ENCODE measurements at regions of chr22 and their contacts with region 1.

Region 1: DNA sequence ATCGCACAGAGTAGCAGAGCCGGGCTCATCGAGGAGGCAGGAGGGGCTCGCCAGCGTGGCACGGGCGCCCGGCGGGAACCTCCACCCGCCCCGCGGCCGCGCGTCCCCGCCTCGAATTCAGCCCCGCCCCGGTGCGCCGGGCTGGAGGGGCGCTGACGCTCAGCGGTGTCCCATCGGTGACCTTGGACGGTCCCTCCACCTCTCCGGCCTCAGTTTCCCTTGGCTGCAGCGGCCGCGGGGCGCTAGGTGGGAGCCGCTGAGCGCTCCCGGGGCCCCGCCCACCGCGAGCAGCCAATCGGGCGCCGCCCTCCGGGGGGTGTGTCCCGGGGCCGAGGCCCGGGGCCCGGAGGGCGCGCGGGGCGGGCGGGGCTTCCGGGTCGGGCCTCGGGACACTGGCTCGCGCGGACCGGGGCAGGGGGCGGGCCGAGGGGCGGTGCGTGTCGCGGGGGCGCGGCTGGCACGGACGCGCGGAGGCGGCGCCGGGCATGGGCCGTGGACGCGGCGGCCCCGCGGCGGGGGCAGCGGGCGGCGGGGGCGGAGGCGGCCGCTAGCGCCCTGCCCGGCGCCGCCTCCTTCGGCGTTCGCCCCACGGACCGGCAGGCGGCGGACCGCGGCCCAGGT is at the start of gene PPARA:
- DNase-seq: peak; percentile 94
- ATAC-seq: peak; percentile 92
- total RNA-seq, gene PPARA: 70.5 TPM

Region 2: DNA sequence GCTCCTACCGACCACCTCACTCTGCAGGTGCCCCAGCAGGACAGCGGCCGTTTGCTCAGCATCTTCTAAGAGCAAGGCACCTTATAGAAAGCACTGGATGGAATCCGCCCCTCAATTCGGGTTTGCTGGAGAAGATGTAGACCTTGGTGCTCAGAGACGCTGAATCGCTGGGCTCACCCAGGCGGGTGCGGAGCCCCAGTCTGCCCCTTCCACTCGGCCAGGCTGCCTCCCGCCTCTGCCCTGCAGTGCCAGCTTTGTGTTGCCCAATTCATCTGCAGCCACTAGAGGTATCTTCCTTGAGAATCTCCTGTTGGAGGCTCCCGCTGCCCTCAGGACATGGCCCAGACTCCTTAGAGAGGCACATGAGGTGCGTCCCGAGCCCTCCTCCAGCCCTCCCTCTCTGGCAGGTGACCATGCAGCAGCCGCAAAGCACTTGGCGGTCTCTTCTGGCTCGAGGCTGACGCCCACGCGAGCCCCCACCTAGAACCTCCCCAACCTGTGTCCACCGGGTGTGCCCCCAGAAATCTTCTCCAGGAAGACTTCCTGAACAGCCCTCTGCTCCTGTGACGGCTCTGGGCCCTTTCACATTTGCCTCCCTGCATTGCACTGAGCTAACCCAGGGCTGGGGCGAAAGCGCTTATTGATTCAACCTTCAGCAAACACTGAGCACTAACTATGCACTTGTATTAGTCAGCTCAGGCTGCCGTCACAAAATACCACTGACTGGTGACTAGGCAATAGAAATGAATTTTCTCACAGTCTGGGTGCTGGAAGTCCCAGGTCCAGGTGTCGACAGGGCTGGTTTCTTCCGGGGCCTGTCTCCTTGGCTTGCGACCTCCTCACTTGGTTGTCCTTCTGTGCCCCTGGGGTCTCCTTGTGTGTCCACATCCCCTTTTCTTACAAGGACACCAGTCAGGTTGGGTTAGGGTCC is 290.6 kb before region 1 on chr22:
- intact Hi-C with region 1: no loop called
- DNase-seq: no peak
- ATAC-seq: no peak

Region 3: DNA sequence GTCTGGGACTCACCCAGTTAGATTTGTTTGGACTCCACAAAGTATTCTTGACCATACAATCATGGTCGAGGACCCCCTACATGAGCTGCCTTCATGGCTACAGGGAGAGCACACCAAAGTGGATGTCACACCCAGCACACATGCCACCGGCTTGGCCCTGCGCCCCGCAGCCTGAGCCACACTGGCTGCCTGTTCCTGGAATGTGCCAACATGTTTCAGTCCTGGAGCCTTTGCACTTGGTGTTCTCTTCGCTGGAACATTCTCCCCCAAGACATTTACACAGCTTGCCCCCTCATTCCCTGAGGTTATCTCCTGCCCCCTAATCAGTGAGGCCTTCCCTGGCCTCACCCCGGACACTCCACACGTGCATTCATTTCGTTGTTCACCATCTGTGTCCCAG is 46.1 kb after region 1 on chr22:
- intact Hi-C with region 1: loop called (anchors 2 kb)
- DNase-seq: peak; percentile 90
- ATAC-seq: peak; percentile 92

Region 4: DNA sequence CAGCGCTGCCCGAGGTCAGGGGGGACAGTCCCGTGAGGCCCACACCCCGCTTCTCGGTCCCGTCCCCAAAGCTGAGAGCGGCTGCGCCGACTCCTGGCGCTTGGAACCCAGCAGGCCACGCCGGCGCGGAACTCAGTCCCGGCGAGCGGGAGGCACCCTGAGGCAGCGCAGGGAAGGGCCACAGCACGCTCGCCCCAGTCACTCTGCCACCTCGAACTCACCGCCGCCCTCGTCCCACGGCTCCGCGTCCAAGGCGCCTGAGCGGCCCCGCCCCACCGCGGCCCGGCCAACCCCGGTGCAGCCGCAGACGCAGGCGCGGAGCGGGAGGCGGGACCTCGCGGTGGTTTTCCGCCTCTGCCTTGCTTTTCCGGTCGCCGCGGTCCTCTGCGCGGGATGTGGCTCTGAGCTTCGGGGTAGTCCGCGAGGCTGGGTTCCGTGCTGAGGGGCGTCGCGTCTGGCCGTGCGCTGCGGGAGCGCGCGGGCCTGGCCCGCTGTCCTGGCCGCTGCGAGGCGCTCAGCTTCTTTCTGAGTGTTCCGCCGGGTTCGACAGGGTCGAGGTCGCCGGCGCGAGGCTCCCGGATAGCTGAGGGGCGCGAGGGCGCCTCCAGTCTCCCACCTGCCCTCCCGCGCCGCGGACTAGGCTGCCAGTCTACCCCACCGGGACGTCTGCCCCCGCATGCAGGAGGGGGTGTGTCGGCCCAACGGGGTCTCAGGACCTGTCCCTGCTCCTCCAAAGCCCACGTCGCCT is 100.1 kb after region 1 on chr22 and contains the start of gene CDPF1:
- intact Hi-C with region 1: loop called (anchors 10 kb)
- DNase-seq: peak; percentile 96
- ATAC-seq: peak; percentile 95
- total RNA-seq, gene CDPF1: 6.2 TPM

Region 5: GRCh38 chr22:46267431-46268279 is 117.5 kb after region 1 on chr22 and contains the start of gene TTC38:
- intact Hi-C with region 1: loop called (anchors 2 kb)
- DNase-seq: peak; percentile 96
- ATAC-seq: peak; percentile 97
- total RNA-seq, gene TTC38: 23.8 TPM

Region 6: DNA sequence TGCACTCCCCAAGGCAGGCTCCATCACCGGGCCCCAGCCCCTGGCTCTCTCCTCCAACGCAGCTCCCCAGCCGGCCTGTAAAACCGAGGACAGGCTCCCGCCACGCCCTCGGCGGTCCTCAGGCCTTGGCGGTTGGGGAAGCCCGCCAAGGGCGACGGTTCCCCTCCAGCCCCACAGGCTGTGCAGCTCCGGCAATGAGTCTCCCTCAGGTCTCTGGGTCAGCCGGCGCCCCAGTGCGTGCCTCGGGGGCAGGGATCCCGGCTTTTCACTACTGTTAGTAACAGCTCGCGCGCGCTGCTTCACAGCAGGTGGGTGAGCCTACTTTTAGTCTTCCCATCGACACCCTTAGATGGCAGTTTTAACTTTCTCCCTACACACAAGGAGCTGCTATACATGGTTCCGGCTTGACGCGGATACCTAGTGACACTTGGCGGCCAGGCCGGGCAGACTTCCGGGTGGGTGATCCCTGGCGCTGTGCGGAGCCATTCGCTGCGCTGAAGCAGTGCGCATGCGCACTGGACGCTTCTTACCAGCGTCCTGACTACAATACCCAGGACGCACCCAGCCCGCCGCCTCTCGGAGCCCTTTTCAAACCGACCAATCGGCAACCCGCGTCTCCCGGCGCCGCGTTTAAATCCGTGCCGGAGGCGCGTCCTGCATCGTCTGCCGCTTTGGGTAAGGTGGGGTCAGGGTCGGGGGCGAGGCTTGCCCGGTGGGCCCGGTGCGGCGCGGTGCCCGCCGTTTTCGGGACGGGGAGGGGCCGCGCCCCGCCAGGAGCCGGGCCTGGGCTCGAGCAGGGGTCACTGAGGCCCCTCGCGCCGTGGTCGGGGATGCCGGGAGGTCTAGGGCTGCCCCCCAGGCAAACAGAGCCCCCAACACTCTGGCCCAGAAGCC is 146.4 kb after region 1 on chr22 and contains the start of gene GTSE1:
- intact Hi-C with region 1: loop called (anchors 5 kb)
- DNase-seq: peak; percentile 100
- ATAC-seq: peak; percentile 98
- total RNA-seq, gene GTSE1: 0.92 TPM

Region 7: DNA sequence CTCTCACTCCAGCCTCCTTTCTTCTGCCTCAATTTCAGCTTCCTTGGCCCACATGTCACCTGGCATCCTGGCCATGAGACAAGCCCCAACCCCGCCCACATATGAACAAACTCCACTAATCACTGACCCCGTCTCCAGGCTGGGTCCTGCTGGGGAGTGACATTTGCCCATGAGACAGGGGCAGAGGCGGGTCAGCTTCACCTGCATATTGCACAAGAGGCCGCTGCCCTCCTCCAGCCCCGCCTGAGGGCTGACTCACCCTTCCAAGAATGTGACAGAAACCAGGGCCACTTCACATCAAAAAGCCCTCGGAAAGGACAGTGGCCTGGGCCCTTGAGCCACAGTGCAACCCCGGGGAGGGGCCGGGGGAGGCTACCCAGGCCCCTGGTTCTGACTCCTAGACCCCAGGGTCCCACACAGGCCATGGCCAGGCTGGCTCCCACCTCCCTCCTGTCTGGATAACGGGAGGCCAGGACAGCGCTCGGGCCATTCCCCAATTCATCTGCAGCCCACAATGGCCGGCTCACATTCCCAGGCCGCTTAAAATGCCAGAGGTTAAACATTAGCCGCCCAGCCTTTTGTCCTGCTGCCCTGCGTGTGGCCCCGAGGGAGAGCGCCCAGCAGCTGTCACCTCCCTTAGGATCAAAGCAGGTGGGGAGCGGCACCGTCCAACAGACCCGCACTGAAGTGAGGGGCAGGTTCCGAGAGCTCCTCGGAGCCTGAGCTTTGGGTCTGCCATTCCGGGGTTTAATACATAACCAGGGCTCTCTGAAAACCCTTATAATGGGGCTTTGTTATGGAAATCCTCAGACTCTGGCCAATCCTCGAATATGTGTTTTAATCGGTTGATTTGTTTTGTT is 227.7 kb after region 1 on chr22:
- intact Hi-C with region 1: no loop called
- DNase-seq: peak; percentile 32
- ATAC-seq: peak; percentile 65